ENCODE measurements at regions of chr13 and their contacts with region 1.

Region 1: DNA sequence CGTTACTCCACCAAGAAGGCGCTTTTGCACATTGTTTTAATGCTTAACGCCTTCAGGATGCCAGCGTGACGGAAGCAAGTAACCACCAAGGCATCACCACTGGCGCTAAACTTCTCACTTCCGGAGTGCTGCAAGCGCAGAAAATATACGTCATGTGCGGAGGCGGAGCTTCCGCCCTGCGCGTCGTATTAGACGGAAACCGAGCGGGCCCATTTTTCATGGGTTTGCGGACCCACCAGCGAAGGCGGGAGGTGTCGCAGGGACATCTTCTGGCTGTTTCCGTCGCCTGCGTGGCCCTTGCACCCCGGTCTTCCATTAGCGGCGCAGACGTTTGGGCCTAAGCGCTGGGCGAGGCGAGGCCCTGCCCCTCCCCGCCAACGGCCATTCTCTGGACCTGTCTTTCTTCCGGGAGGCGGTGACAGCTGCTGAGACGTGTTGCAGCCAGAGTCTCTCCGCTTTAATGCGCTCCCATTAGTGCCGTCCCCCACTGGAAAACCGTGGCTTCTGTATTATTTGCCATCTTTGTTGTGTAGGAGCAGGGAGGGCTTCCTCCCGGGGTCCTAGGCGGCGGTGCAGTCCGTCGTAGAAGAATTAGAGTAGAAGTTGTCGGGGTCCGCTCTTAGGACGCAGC is at the start of gene ERCC5:
- DNase-seq: peak; percentile 97
- H3K4me3 Mint-ChIP-seq: peak within 1 kb of the TSS; percentile 92
- H3K27ac Mint-ChIP-seq: peak within 1 kb of the TSS; percentile 95
- H3K4me1 Mint-ChIP-seq: peaks cover 35% of the 10 kb centered on the region
- H3K27me3 Mint-ChIP-seq: peaks cover 1% of the 10 kb centered on the region
- total RNA-seq, gene ERCC5: 53.6 to 63.5 TPM

Region 2: GRCh38 chr13:102394158-102395053 is 451.3 kb before region 1 on chr13:
- CTCF ChIA-PET with region 1: no interaction called
- POLR2A ChIA-PET with region 1: no interaction called
- intact Hi-C with region 1: loop called (anchors 1 kb)
- DNase-seq: peak; percentile 97
- H3K4me3 Mint-ChIP-seq: peak overlapping the region; percentile 78
- H3K27ac Mint-ChIP-seq: peak overlapping the region; percentile 69
- H3K4me1 Mint-ChIP-seq: peaks cover 21% of the 10 kb centered on the region
- H3K27me3 Mint-ChIP-seq: peaks cover 10% of the 10 kb centered on the region

Region 3: DNA sequence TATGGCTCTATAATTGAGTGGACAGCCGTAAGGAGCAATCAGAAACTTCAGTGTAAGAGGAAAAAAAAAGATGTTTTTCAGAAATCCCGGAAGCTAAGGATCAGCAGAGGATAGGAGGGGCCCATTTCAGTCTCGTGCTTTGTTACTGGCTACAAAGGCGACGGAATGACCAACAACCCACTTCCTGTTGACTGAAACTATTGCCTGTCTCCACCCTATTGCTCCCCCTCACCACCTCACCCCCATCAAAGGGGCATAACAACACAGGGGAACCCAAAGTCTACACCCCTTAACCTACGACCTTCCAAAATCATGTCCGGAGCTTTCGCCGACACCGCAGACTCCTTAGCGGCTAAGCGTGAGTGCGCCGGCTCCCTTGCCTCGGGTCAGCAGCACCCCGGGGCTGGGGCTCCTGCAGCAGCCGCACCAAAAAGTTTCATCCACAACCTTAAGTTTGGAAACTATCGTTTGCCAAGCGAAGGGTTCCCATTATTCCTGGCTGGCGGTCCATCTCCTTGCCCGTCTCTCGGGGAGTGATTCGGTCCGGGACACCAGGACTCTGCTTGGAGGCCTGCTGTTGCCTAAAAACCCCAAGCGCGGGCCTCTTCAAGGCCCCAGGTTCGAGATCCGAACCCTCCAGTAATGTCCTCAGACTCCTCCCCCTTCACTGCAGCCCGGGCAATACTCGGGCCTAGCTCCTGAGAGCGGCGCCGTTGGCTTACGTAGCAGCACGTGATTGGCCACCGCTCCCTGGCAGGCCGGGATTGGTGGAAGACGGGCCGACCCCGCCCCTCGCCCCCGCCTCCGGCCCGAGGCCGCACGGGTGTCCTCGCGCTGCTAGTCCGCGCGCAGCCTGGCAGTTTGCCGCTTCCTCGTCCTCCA is 249.4 kb before region 1 on chr13 and contains the start of gene TPP2:
- CTCF ChIA-PET with region 1: interaction called, 22 read pairs
- POLR2A ChIA-PET with region 1: interaction called, 43 read pairs
- intact Hi-C with region 1: loop called (anchors 1 kb)
- DNase-seq: peak; percentile 99
- H3K4me3 Mint-ChIP-seq: peak within 1 kb of the TSS; percentile 99
- H3K27ac Mint-ChIP-seq: peak within 1 kb of the TSS; percentile 100
- H3K4me1 Mint-ChIP-seq: peaks cover 60% of the 10 kb centered on the region
- H3K27me3 Mint-ChIP-seq: no peaks in the 10 kb centered on the region
- total RNA-seq, gene TPP2: 64.7 to 65.6 TPM

Region 4: DNA sequence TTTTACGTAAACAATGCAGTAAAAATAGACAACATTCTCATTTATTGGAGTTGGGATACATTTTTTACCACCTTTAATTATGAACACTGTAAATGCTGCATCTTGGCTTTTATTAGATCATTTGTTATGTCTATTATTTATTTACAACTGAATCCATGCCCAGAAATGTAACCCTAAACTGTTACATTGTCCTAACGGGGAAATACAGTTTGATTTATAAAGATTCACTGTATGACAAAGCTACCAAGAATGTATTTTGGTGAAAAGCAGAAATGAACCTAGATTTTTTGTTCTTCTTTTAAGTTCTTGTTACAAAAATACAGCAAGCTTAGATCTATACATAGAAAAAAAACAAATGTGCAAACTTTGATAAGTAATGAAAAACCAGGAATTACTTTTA is 152.0 kb before region 1 on chr13:
- CTCF ChIA-PET with region 1: no interaction called
- POLR2A ChIA-PET with region 1: no interaction called
- intact Hi-C with region 1: no loop called
- DNase-seq: no peak
- H3K4me3 Mint-ChIP-seq: no peak overlapping the region
- H3K27ac Mint-ChIP-seq: no peak overlapping the region
- H3K4me1 Mint-ChIP-seq: no peaks in the 10 kb centered on the region
- H3K27me3 Mint-ChIP-seq: peaks cover 18% of the 10 kb centered on the region

Region 5: DNA sequence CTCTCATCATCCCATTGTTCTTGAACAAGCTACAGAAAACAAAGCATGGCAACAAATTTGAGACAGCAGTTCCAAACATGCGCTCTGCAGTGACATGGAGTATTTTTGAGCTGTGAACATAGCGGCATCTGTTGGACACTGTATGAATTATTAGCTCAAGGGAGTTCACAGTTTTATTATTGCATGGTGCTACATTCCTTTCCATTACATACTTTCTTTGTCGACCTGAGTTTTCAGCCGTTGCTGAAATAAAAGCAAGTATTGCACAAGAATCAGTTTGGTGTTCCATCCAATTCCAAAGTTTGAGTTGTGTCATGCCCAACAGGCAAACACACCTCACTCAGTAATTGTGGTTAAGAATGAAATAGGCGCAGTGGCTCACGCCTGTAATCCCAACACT is 120.8 kb before region 1 on chr13:
- CTCF ChIA-PET with region 1: no interaction called
- POLR2A ChIA-PET with region 1: no interaction called
- intact Hi-C with region 1: loop called (anchors 2 kb)
- DNase-seq: no peak
- H3K4me3 Mint-ChIP-seq: no peak overlapping the region
- H3K27ac Mint-ChIP-seq: no peak overlapping the region
- H3K4me1 Mint-ChIP-seq: peaks cover 5% of the 10 kb centered on the region
- H3K27me3 Mint-ChIP-seq: peaks cover 3% of the 10 kb centered on the region

Region 6: DNA sequence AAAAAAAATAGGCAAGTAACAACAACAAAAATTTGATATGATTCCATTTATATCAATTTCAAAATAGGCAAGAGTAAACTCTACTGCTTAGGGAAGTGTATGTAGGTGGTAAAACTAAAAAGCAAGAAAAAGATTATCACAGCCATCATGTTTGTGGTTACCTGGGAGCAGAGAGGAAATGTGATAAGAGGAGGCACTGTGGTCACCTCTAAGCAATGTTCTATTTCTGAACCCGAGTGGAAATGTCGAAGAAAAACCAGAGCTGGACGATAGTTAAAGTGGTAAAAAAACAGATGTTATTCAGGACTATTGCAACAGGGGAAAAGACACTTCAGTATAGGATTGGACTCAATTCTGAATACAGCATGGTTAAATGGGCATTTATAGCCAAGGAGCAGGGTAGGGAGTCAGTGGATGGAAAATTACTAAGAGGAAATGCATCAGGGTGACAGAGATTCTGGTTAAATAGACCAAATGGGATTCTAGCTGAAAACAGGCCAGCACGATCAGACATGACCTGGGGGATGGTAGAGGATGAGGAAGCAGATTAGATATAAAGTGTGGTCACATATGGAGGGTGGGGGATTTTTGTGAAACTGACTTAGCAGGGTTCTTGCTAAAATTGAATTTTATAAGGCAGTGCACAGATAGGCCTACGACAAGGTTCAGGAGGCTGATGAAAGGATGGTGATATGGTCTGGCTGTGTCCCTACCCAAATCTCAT is 66.1 kb before region 1 on chr13:
- CTCF ChIA-PET with region 1: no interaction called
- POLR2A ChIA-PET with region 1: interaction called, 10 read pairs
- intact Hi-C with region 1: loop called (anchors 1 kb)
- DNase-seq: peak; percentile 47
- H3K4me3 Mint-ChIP-seq: peak overlapping the region; percentile 14
- H3K27ac Mint-ChIP-seq: peak overlapping the region; percentile 90
- H3K4me1 Mint-ChIP-seq: peaks cover 28% of the 10 kb centered on the region
- H3K27me3 Mint-ChIP-seq: no peaks in the 10 kb centered on the region

Region 7: DNA sequence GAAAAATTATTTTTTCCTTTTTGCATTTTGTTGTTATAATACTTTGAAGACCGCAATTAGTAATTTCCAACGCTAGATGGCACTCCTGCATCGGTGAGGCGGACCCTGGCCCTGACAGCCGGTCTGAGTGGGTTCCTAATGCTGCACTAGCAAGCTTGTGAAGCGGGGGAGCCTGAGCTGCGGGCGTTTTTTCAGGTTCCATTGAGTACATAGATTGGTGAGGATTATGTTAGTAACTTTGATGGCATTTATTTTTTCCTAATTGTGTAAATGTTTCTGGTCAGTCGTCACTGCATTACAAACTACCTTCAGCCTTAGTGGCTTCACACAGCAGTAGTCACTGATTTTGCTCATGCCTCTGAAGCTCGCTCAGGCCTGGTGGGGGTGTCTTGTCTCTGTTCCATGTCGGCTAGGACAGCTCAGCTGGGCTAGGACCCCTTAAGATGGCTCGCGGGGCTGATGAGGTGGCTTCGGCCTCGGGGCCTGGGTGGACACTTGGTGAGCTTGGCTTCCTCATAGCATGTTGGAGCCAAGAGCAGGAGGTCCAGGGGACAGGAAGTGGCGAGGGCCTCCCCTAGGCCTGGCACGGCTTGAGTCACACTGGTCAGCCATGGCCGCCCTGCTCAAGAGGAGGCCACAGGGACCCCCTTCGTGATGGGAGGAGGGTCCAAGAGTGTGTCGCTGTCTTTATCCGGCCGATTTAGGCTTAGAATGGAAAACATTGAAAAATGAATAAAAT is 25.1 kb after region 1 on chr13:
- CTCF ChIA-PET with region 1: interaction called, 24 read pairs
- POLR2A ChIA-PET with region 1: no interaction called
- intact Hi-C with region 1: loop called (anchors 2 kb)
- DNase-seq: peak; percentile 57
- H3K4me3 Mint-ChIP-seq: no peak overlapping the region
- H3K27ac Mint-ChIP-seq: no peak overlapping the region
- H3K4me1 Mint-ChIP-seq: peaks cover 26% of the 10 kb centered on the region
- H3K27me3 Mint-ChIP-seq: no peaks in the 10 kb centered on the region

Region 8: GRCh38 chr13:102947745-102948405 is 102.1 kb after region 1 on chr13:
- CTCF ChIA-PET with region 1: no interaction called
- POLR2A ChIA-PET with region 1: no interaction called
- intact Hi-C with region 1: no loop called
- DNase-seq: no peak
- H3K4me3 Mint-ChIP-seq: no peak overlapping the region
- H3K27ac Mint-ChIP-seq: no peak overlapping the region
- H3K4me1 Mint-ChIP-seq: no peaks in the 10 kb centered on the region
- H3K27me3 Mint-ChIP-seq: peaks cover under 1% of the 10 kb centered on the region

Region 9: GRCh38 chr13:103844471-103844870 is 998.7 kb after region 1 on chr13:
- CTCF ChIA-PET with region 1: no interaction called
- POLR2A ChIA-PET with region 1: no interaction called
- intact Hi-C with region 1: no loop called
- DNase-seq: no peak
- H3K4me3 Mint-ChIP-seq: no peak overlapping the region
- H3K27ac Mint-ChIP-seq: no peak overlapping the region
- H3K4me1 Mint-ChIP-seq: no peaks in the 10 kb centered on the region
- H3K27me3 Mint-ChIP-seq: no peaks in the 10 kb centered on the region